ENCODE measurements at regions of chr9 and their contacts with region 1.

Region 1: GRCh38 chr9:127586537-127586936 is 25.5 kb upstream of the STXBP1 start:
- DNase-seq: peak; percentile 53 to 56 (median 56)
- H3K4me3 ChIP-seq: no peak overlapping the region
- H3K4me3 Mint-ChIP-seq: no peak overlapping the region
- H3K27ac ChIP-seq: no peak overlapping the region
- H3K27ac Mint-ChIP-seq: peak overlapping the region in 1 of 7 donors; percentile 76
- H3K4me1 ChIP-seq: no peaks in the 10 kb centered on the region
- H3K4me1 Mint-ChIP-seq: peaks cover 0 to 3% (median 2%) of the 10 kb centered on the region in 4 donors
- H3K27me3 ChIP-seq: no peaks in the 10 kb centered on the region
- H3K27me3 Mint-ChIP-seq: peaks cover 3 to 5% of the 10 kb centered on the region in 2 donors

Region 2: GRCh38 chr9:127214421-127215267 is 371.9 kb before region 1 on chr9:
- CTCF ChIA-PET with region 1: interaction called, 8 read pairs
- POLR2A ChIA-PET with region 1: no interaction called
- intact Hi-C with region 1: loop called (anchors 10 kb)
- DNase-seq: peak; percentile 51 to 71 (median 55)
- H3K4me3 ChIP-seq: no peak overlapping the region
- H3K4me3 Mint-ChIP-seq: no peak overlapping the region
- H3K27ac ChIP-seq: no peak overlapping the region
- H3K27ac Mint-ChIP-seq: peak overlapping the region in 1 of 7 donors; percentile 20
- H3K4me1 ChIP-seq: no peaks in the 10 kb centered on the region
- H3K4me1 Mint-ChIP-seq: peaks cover 0 to 6% (median 2%) of the 10 kb centered on the region in 4 donors
- H3K27me3 ChIP-seq: no peaks in the 10 kb centered on the region
- H3K27me3 Mint-ChIP-seq: peaks cover 0 to 1% of the 10 kb centered on the region in 2 donors

Region 3: GRCh38 chr9:127233550-127233949 is 353.0 kb before region 1 on chr9:
- CTCF ChIA-PET with region 1: no interaction called
- POLR2A ChIA-PET with region 1: no interaction called
- intact Hi-C with region 1: no loop called
- DNase-seq: no peak
- H3K4me3 ChIP-seq: no peak overlapping the region
- H3K4me3 Mint-ChIP-seq: no peak overlapping the region
- H3K27ac ChIP-seq: no peak overlapping the region
- H3K27ac Mint-ChIP-seq: no peak overlapping the region
- H3K4me1 ChIP-seq: no peaks in the 10 kb centered on the region
- H3K4me1 Mint-ChIP-seq: no peaks in the 10 kb centered on the region
- H3K27me3 ChIP-seq: no peaks in the 10 kb centered on the region
- H3K27me3 Mint-ChIP-seq: peaks cover 8 to 9% of the 10 kb centered on the region in 2 donors

Region 4: GRCh38 chr9:127525401-127526187 is 60.9 kb before region 1 on chr9:
- CTCF ChIA-PET with region 1: interaction called, 78 read pairs
- POLR2A ChIA-PET with region 1: interaction called, 3 read pairs
- intact Hi-C with region 1: loop called (anchors 1 kb)
- DNase-seq: peak in 4 of 5 donors; percentile 18 to 32 (median 25)
- H3K4me3 ChIP-seq: no peak overlapping the region
- H3K4me3 Mint-ChIP-seq: peak overlapping the region in 1 of 8 donors; percentile 26
- H3K27ac ChIP-seq: no peak overlapping the region
- H3K27ac Mint-ChIP-seq: no peak overlapping the region
- H3K4me1 ChIP-seq: no peaks in the 10 kb centered on the region
- H3K4me1 Mint-ChIP-seq: no peaks in the 10 kb centered on the region
- H3K27me3 ChIP-seq: no peaks in the 10 kb centered on the region
- H3K27me3 Mint-ChIP-seq: no peaks in the 10 kb centered on the region

Region 5: DNA sequence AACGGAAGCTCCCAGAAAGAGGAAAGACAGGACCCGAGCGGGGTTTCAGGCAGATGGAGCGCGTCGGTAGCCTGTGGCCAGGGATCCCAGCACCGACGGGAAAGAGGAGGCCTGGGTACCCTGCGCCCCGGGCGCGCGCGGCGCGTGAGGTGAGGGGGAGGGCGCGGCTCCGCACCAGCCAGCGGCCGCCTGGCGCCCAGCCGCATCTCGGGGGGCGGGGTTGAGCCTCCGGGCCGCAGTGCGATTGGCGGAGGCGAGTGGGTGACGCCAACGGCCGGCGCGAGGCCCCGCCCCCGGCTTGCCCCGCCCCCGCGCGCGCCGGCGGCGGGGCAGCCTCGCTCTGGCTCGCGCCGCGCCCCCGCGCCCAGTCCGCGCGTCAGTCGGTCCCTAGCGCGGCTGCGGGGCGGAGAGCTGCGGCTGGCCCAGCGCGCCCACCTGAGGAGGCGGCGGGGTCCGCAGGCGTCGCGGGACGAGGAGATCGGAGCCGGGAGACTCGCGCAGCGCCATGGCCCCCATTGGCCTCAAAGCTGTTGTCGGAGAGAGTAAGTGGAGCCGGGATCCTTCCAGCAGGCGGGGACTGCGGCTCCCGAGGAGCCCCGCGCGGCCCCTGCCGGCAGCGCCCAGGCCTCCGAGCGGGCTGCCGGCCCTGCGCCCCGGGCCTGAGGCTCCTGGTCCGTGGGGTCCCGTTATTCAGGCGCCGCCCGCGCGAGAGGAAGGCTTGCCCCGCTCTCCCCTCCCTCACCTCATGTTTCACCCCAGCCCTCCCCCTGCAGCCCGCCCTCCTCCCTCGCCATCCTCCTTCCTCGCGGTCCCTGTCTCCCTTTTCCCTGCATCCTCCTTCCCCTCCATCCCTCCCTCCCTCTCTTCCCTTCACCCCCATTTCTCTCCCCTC is 25.6 kb after region 1 on chr9 and contains the start of gene STXBP1:
- CTCF ChIA-PET with region 1: interaction called, 10 read pairs
- POLR2A ChIA-PET with region 1: interaction called, 3 read pairs
- intact Hi-C with region 1: no loop called
- DNase-seq: peak; percentile 81 to 88 (median 85)
- H3K4me3 ChIP-seq: peak within 1 kb of the TSS; percentile 54 to 74
- H3K4me3 Mint-ChIP-seq: peak within 1 kb of the TSS; percentile 88 to 98 (median 96)
- H3K27ac ChIP-seq: peak within 1 kb of the TSS; percentile 24
- H3K27ac Mint-ChIP-seq: peak within 1 kb of the TSS; percentile 59 to 93 (median 87)
- H3K4me1 ChIP-seq: peaks cover 32% of the 10 kb centered on the region
- H3K4me1 Mint-ChIP-seq: peaks cover 23 to 45% (median 32%) of the 10 kb centered on the region in 4 donors
- H3K27me3 ChIP-seq: peaks cover 4% of the 10 kb centered on the region
- H3K27me3 Mint-ChIP-seq: peaks cover 5 to 14% of the 10 kb centered on the region in 2 donors
- total RNA-seq, gene STXBP1: 19.9 to 20.9 TPM

Measured in CD4-positive, alpha-beta memory T cell (primary cell).